PC-9 (cell line): ENCODE measurements at regions of chr19 and their contacts with region 1.

Region 1: GRCh38 chr19:5128251-5128935 is 159.5 kb downstream of the KDM4B start:
- DNase-seq: no peak
- H3K4me3 ChIP-seq: no peak overlapping the region
- H3K27ac ChIP-seq: no peak overlapping the region
- H3K4me1 ChIP-seq: peaks cover 11% of the 10 kb centered on the region; the same call in 1 of the 2 replicates
- H3K27me3 ChIP-seq: no peaks in the 10 kb centered on the region
- CTCF ChIP-seq: no peak

Region 2: GRCh38 chr19:5154129-5154798 is 25.9 kb after region 1 on chr19:
- CTCF ChIA-PET with region 1: no interaction called
- POLR2A ChIA-PET with region 1: no interaction called
- intact Hi-C with region 1: no loop called
- DNase-seq: no peak
- H3K4me3 ChIP-seq: no peak overlapping the region
- H3K27ac ChIP-seq: no peak overlapping the region
- H3K4me1 ChIP-seq: no peaks in the 10 kb centered on the region
- H3K27me3 ChIP-seq: no peaks in the 10 kb centered on the region
- CTCF ChIP-seq: peak; percentile 58

Region 3: DNA sequence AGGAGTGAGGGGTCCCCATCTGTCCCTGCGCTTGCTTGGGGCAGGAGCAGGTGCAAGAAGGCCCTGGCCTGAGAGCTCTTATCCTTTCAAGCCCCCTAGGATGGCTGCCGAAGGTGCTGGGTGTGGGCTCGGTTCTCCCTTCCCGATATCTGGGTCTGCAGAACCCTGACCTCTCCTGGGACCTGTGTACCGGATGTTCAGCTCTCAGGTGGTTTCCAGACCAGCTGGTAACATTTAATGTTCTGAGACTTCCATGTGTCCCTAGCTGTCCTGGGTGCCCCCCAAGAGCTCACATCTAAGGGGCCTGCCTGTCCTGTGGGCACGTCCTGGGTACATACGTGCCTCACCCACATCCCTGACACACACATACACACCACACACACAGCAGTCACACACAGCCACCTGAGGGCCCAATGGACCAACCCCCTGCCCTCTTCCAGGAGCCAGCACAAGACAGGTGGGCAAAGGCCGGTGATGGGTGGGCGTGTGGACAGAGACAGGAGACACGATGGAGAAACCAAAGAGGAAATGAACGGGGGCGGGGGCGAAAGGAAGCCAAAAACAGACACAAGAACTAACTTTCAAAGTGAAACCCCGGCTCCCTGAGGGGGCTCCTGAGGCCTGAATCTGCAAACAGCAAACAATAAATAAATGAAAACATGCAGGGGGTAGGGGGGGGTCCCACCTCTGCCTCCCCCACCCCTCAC is 87.9 kb after region 1 on chr19:
- CTCF ChIA-PET with region 1: interaction called, 12 read pairs
- POLR2A ChIA-PET with region 1: no interaction called
- intact Hi-C with region 1: no loop called
- DNase-seq: no peak
- H3K4me3 ChIP-seq: no peak overlapping the region
- H3K27ac ChIP-seq: no peak overlapping the region
- H3K4me1 ChIP-seq: no peaks in the 10 kb centered on the region
- H3K27me3 ChIP-seq: no peaks in the 10 kb centered on the region
- CTCF ChIP-seq: no peak